CD4-positive, alpha-beta T cell (primary cell): ENCODE measurements at regions of chr6 and their contacts with region 1.

Region 1: DNA sequence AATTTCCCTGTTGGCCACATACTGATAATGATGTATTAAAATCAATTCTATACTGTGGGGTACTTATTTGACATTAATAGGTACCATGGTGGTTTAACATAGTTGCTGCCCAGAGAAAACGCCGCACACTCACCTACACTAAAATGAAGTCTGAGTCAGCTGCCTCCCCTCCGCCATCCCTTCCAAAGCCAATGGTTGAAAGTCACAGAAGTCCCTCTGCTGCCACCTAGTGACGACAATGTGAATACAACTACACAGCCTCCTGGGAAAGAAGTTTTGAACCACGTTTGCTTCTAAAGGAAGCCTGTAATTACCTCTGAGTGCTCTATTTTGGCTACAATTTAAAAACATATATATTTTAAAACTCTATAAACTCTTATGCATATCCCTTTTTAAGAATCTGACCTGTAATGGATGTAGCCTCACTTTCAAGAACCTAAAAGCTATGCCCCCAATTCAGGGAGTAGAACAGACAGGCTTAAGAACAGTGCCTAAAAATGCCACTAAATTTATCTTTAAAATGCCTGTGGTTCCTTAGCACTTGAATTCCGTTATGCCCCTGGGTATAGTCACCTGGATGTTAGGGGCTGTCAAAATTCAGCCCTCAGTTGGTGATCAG is 20.6 kb upstream of the ECI2 start:
- DNase-seq: peak; percentile 57 to 91 (median 72)
- ATAC-seq: peak; percentile 99
- H3K4me3 ChIP-seq: no peak overlapping the region
- H3K4me3 Mint-ChIP-seq: no peak overlapping the region
- H3K27ac ChIP-seq: no peak overlapping the region
- H3K27ac Mint-ChIP-seq: no peak overlapping the region
- H3K4me1 ChIP-seq: no peaks in the 10 kb centered on the region
- H3K4me1 Mint-ChIP-seq: peaks cover 5% of the 10 kb centered on the region
- H3K27me3 ChIP-seq: no peaks in the 10 kb centered on the region
- H3K27me3 Mint-ChIP-seq: peaks cover 15% of the 10 kb centered on the region
- CTCF ChIP-seq: peak; percentile 86

Region 2: DNA sequence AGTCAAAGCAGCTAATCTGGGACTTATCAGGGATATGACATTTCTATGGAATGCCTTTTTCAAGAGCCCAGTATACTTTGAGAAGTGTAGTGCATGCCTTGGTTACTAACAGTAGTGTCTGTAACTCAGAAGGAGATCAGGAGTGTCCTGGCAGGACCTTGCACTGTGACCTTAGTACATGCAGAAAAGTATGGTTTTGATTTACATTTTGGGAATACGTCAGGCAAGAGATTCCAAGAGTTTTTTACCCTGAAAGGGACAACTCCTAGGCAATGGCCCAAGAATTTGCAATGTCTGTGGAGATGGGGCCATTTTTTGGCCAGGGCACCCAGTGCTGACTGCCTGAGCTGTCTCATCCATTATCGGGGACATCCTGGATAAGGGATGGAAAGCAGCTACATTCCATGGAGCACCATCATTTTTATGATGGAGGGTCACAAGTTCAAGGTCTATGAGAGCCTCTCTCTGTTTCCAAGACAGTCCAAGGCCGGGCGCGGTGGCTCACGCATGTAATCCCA is 226.6 kb before region 1 on chr6:
- CTCF ChIA-PET with region 1: no interaction called
- POLR2A ChIA-PET with region 1: no interaction called
- intact Hi-C with region 1: loop called in 1 of 2 experiments (anchors 5 kb)
- DNase-seq: no peak
- ATAC-seq: no peak
- H3K4me3 ChIP-seq: no peak overlapping the region
- H3K4me3 Mint-ChIP-seq: no peak overlapping the region
- H3K27ac ChIP-seq: no peak overlapping the region
- H3K27ac Mint-ChIP-seq: no peak overlapping the region
- H3K4me1 ChIP-seq: peaks cover 4% of the 10 kb centered on the region
- H3K4me1 Mint-ChIP-seq: no peaks in the 10 kb centered on the region
- H3K27me3 ChIP-seq: no peaks in the 10 kb centered on the region
- H3K27me3 Mint-ChIP-seq: peaks cover 5% of the 10 kb centered on the region
- CTCF ChIP-seq: no peak

Region 3: DNA sequence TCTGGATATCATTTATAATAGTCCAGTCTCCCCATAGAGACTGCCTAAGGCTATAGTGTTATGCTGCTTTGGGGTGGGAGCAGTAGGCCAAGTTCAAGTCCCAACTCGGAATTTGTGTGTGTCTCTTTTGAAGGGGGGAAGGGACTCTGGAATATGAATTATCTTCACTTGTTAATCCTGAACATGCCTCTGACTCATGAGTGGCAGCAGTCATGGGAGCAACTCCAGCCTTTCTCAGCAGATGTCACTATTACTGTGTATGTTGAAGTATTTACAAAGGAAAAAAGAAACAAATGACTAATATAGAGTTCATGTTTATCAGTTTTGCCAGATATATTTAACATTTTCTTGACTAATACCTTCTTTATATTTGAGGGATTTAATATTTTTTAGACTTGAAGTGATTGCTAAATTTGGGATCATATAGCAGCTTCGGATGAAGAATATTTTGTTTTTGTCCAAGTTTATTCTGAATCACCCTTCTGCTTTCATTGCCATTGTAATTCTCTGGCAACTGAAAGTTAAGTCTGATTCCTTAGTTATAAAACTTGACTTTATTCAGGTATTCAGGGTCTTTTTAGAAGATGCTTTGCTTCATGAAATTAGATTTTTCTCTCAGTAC is 100.4 kb before region 1 on chr6:
- CTCF ChIA-PET with region 1: interaction called, 22 read pairs
- POLR2A ChIA-PET with region 1: no interaction called
- intact Hi-C with region 1: loop called (anchors 1 to 2 kb)
- DNase-seq: peak in 4 of 14 experiments; percentile 11 to 28 (median 28)
- ATAC-seq: no peak
- H3K4me3 ChIP-seq: no peak overlapping the region
- H3K4me3 Mint-ChIP-seq: no peak overlapping the region
- H3K27ac ChIP-seq: no peak overlapping the region
- H3K27ac Mint-ChIP-seq: no peak overlapping the region
- H3K4me1 ChIP-seq: peaks cover 5% of the 10 kb centered on the region
- H3K4me1 Mint-ChIP-seq: peaks cover 31% of the 10 kb centered on the region
- H3K27me3 ChIP-seq: no peaks in the 10 kb centered on the region
- H3K27me3 Mint-ChIP-seq: no peaks in the 10 kb centered on the region
- CTCF ChIP-seq: no peak

Region 4: DNA sequence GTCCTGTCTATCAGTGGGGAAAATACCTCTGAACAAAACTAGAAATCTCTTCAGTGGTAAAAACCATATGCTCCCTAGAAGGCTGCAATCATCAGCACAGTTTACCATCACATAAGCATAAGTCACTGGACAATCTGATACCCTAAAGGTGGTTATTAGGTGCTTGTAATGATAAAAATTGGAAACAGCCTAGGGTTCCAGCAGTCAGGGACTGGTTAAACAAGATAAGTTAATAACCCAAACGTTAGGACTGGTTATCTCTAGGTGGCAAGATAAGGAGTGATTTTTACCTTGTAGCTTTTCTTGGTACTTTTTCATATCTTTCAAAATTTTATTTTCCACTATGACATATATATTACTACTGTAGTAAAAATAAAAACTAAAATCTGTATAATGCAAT is 31.6 kb before region 1 on chr6:
- CTCF ChIA-PET with region 1: interaction called, 4 read pairs
- POLR2A ChIA-PET with region 1: no interaction called
- intact Hi-C with region 1: loop called in 1 of 2 experiments (anchors 5 kb)
- DNase-seq: no peak
- ATAC-seq: no peak
- H3K4me3 ChIP-seq: no peak overlapping the region
- H3K4me3 Mint-ChIP-seq: no peak overlapping the region
- H3K27ac ChIP-seq: no peak overlapping the region
- H3K27ac Mint-ChIP-seq: no peak overlapping the region
- H3K4me1 ChIP-seq: no peaks in the 10 kb centered on the region
- H3K4me1 Mint-ChIP-seq: no peaks in the 10 kb centered on the region
- H3K27me3 ChIP-seq: no peaks in the 10 kb centered on the region
- H3K27me3 Mint-ChIP-seq: no peaks in the 10 kb centered on the region
- CTCF ChIP-seq: no peak

Region 5: DNA sequence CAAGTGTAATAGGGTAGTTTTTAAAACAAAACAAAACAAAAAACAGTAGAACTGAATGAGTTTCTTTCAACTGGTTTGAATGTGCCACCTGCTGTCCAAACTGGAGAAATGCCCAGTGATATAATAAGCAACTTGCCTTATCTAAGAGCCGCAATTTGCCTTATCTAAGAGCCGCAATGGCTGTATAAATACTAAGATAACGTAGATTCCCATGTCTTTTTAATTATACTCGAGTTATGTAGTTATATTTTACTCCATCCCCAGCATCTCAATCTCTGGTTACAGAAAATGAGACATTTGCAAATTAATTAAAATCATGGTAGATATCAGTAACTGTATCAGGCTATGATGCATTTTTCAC is 780.7 kb after region 1 on chr6:
- CTCF ChIA-PET with region 1: no interaction called
- POLR2A ChIA-PET with region 1: no interaction called
- intact Hi-C with region 1: loop called in 1 of 2 experiments (anchors 5 kb)
- DNase-seq: peak in 3 of 14 experiments; percentile 25 to 45 (median 41)
- ATAC-seq: no peak
- H3K4me3 ChIP-seq: no peak overlapping the region
- H3K4me3 Mint-ChIP-seq: no peak overlapping the region
- H3K27ac ChIP-seq: no peak overlapping the region
- H3K27ac Mint-ChIP-seq: no peak overlapping the region
- H3K4me1 ChIP-seq: peaks cover 7% of the 10 kb centered on the region
- H3K4me1 Mint-ChIP-seq: peaks cover 55% of the 10 kb centered on the region
- H3K27me3 ChIP-seq: no peaks in the 10 kb centered on the region
- H3K27me3 Mint-ChIP-seq: no peaks in the 10 kb centered on the region
- CTCF ChIP-seq: peak; percentile 59

Region 6: GRCh38 chr6:5937169-5937909 is 1781.4 kb after region 1 on chr6:
- CTCF ChIA-PET with region 1: no interaction called
- POLR2A ChIA-PET with region 1: no interaction called
- intact Hi-C with region 1: no loop called
- DNase-seq: no peak
- ATAC-seq: no peak
- H3K4me3 ChIP-seq: no peak overlapping the region
- H3K4me3 Mint-ChIP-seq: no peak overlapping the region
- H3K27ac ChIP-seq: no peak overlapping the region
- H3K27ac Mint-ChIP-seq: no peak overlapping the region
- H3K4me1 ChIP-seq: no peaks in the 10 kb centered on the region
- H3K4me1 Mint-ChIP-seq: no peaks in the 10 kb centered on the region
- H3K27me3 ChIP-seq: peaks cover 0 to 6% of the 10 kb centered on the region in 2 experiments
- H3K27me3 Mint-ChIP-seq: peaks cover 18% of the 10 kb centered on the region
- CTCF ChIP-seq: no peak